Astrocyte of the cerebellum (primary cell): ENCODE measurements at regions of chr16 and their contacts with region 1.

Region 1: GRCh38 chr16:16033208-16033717 is 83.8 kb downstream of the ABCC1 start:
- DNase-seq: no peak
- H3K4me3 ChIP-seq: no peak overlapping the region
- CTCF ChIP-seq: no peak

Region 2: DNA sequence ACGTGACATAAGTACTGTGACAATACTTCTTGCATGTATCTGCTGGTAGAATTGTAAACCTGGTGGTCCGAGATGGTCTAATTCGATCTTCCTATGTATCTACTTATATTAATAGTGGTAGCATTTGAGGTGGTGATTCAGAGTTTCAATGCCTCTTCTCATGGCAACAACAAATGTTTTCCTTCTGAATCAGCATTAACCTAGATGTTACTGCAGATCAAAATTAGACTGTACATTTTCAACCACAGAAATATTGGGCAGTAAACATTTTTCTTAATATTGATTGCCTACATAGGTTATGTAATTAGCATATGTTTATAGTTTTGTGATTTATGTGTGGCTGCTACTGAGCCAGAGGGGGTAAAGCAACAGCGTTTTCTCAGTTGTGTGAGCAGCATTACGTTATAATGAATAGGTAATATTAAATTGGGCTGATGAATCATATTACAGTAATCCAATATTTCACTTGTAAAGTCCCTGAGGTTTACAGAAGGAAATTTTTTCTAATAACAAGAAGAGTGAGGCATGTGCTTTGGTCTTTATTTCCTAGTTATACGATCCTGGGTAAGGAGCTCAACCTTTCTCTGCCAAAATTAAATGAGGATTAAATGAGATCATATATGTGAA is 617.7 kb before region 1 on chr16:
- in situ Hi-C with region 1: no loop called
- DNase-seq: no peak
- H3K4me3 ChIP-seq: no peak overlapping the region
- CTCF ChIP-seq: no peak

Region 3: DNA sequence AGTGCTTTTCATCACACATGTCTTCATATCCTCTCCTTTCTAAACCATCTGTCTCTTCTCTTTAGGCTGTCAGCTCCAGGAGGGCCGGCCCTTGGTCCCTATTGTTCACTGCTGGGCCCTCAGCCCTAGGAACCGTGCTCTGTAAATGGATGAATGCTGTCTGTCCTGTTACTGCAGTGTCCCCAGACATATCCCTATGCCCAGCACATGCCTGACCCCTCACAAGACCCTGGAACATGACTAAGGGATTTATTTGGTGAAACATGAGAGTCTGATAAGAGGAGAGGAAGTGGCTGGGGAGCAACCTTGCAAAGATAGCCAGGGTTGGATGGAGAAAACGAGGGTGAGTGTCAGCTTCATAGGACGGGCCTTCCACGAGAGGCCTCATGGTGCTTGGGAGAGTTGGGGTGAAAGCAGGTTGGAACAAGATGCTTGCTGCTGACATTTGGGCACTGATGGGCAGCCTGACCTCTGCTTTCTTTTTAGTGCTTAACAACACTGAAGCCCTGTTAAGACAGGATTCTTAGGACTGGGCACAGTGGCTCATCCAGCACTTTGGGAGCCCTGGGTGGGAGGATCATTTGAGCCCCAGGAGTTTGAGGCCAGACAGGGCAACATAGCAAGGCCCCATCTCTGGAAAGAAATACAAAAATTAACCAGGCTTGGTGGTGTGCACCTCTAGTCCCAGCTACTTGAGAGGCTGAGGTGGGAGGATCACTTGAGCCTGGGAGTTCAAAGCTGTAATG is 44.8 kb before region 1 on chr16:
- in situ Hi-C with region 1: loop called (anchors 5 kb)
- DNase-seq: no peak
- H3K4me3 ChIP-seq: no peak overlapping the region
- CTCF ChIP-seq: no peak

Region 4: DNA sequence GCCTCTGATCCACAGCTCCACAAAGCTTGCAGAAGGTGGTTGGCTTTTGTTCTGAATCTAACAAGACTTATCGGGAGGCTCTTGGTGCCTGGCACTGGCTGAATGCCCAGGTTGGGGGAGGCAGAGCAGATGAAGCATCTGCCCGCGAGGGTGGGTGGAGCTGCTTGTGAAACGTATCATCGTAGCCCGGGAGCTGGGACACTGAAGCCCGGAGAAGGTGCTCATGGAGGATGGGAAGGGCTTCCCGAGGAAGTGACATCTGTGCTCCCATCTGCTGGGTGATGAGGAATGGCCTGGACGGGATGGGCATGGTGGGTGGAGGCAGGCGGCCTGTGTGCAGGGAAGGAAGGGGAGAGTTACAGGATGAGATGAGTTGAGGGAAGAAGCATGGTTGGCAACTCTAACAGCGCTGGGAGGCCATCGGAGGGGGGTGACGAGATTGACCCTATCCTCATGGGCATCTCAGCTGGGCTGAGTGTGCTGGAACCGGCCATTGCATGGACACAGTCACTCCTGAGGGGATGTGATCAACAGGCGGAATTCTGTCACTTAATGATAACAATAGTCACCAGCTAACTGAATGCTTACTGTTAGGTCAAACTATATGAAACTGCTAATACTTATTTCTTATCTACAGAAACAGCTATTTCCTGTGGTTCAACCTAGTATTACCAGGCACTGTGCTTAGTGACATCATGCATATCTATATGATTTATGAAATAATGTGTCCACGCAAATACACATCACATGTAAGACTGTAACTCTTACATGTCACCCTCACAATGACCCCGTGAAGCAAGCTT is 87.3 kb after region 1 on chr16:
- in situ Hi-C with region 1: loop called (anchors 5 kb)
- DNase-seq: no peak
- H3K4me3 ChIP-seq: no peak overlapping the region
- CTCF ChIP-seq: no peak